CD8-positive, alpha-beta T cell (primary cell): ENCODE measurements at regions of chr19 and their contacts with region 1.

Region 1: DNA sequence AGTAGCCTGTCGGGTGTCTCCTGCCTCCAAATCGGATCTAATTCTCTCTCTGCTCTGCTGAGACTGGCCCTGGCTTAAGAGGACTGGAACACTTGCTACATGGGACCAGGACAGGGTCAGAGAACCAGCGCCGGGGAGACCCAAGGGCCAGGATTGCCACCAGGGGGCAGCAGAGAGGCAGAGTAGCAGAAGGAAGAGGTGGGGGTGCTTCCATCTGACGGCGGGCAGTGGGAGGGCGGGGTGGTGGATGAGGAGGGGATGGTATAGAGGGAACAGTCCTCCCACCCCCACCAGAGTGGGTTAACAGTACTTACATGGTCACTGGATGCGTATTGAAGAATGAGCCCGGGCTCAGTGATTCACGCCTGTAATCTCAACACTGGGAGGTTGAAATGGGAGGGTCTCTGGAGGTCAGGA is 11.9 kb downstream of the SELENOW start:
- DNase-seq: peak; percentile 63 to 91 (median 80)
- ATAC-seq: peak; percentile 80
- H3K4me3 ChIP-seq: no peak overlapping the region
- H3K4me3 Mint-ChIP-seq: no peak overlapping the region
- H3K27ac ChIP-seq: no peak overlapping the region
- H3K27ac Mint-ChIP-seq: no peak overlapping the region
- H3K4me1 ChIP-seq: peaks cover 5% of the 10 kb centered on the region
- H3K4me1 Mint-ChIP-seq: peaks cover 3% of the 10 kb centered on the region
- H3K27me3 ChIP-seq: no peaks in the 10 kb centered on the region
- H3K27me3 Mint-ChIP-seq: peaks cover 1% of the 10 kb centered on the region
- CTCF ChIP-seq: peak; percentile 77

Region 2: GRCh38 chr19:47713046-47714021 is 77.1 kb before region 1 on chr19 and contains the start of gene EHD2:
- CTCF ChIA-PET with region 1: interaction called, 10 read pairs
- POLR2A ChIA-PET with region 1: no interaction called
- intact Hi-C with region 1: loop called in 1 of 2 experiments (anchors 2 kb)
- DNase-seq: peak in 7 of 9 experiments; percentile 11 to 67 (median 50)
- ATAC-seq: peak; percentile 65
- H3K4me3 ChIP-seq: no peak within 1 kb of the TSS
- H3K4me3 Mint-ChIP-seq: no peak within 1 kb of the TSS
- H3K27ac ChIP-seq: no peak within 1 kb of the TSS
- H3K27ac Mint-ChIP-seq: no peak within 1 kb of the TSS
- H3K4me1 ChIP-seq: no peaks in the 10 kb centered on the region
- H3K4me1 Mint-ChIP-seq: peaks cover 2% of the 10 kb centered on the region
- H3K27me3 ChIP-seq: peaks cover 0 to 16% of the 10 kb centered on the region in 2 experiments
- H3K27me3 Mint-ChIP-seq: peaks cover 40% of the 10 kb centered on the region
- CTCF ChIP-seq: peak; percentile 85
- total RNA-seq, gene EHD2: 0.25 TPM in 1 of 2 experiments, not detected in the other

Region 3: DNA sequence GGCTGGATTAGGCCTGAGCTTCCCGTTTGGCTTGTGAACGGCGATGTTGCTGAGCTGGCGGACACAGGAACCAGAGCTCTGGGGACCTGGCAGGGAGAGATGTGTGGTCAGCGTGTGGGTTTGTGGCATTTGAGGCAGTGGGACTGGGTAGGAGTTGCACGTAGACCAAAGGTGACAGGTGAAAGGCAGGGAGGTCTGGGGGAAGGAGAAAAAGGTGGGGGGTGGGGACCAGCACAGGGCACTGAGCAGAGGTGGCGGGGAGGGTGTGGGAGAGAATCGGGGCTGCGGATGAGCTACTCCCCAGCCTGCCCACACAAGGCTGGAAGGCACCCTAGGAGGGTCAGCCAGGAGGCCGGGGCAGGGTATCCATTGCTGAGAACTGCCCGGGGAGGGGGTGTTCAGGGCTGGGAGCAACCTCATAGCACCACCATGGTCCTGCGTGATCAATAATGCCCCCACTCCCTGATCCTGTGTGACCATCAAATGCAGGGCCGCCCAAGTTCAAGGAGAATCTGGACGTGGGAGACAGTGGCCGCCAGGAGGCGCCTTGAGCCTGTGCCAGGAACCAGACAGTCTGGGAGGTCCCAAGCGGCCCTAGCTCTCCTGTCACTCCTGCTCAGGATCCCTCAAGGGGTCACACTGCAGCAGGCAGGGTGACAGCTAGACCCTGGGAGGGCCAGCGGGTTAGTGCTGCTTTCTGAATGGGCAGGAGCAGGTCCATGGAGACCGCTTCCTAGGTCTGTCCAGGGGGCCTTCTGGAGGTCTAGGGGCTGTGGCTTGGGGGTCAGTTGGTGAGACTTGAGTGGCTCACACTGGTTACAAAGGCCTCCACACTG is 24.7 kb before region 1 on chr19:
- CTCF ChIA-PET with region 1: interaction called, 16 read pairs
- POLR2A ChIA-PET with region 1: no interaction called
- intact Hi-C with region 1: loop called (anchors 1 kb)
- DNase-seq: peak in 6 of 9 experiments; percentile 17 to 62 (median 50)
- ATAC-seq: peak; percentile 46
- H3K4me3 ChIP-seq: no peak overlapping the region
- H3K4me3 Mint-ChIP-seq: no peak overlapping the region
- H3K27ac ChIP-seq: no peak overlapping the region
- H3K27ac Mint-ChIP-seq: no peak overlapping the region
- H3K4me1 ChIP-seq: no peaks in the 10 kb centered on the region
- H3K4me1 Mint-ChIP-seq: peaks cover 5% of the 10 kb centered on the region
- H3K27me3 ChIP-seq: no peaks in the 10 kb centered on the region
- H3K27me3 Mint-ChIP-seq: peaks cover 3% of the 10 kb centered on the region
- CTCF ChIP-seq: peak; percentile 36